B cell (primary cell): ENCODE measurements at regions of chr14 and their contacts with region 1.

Region 1: DNA sequence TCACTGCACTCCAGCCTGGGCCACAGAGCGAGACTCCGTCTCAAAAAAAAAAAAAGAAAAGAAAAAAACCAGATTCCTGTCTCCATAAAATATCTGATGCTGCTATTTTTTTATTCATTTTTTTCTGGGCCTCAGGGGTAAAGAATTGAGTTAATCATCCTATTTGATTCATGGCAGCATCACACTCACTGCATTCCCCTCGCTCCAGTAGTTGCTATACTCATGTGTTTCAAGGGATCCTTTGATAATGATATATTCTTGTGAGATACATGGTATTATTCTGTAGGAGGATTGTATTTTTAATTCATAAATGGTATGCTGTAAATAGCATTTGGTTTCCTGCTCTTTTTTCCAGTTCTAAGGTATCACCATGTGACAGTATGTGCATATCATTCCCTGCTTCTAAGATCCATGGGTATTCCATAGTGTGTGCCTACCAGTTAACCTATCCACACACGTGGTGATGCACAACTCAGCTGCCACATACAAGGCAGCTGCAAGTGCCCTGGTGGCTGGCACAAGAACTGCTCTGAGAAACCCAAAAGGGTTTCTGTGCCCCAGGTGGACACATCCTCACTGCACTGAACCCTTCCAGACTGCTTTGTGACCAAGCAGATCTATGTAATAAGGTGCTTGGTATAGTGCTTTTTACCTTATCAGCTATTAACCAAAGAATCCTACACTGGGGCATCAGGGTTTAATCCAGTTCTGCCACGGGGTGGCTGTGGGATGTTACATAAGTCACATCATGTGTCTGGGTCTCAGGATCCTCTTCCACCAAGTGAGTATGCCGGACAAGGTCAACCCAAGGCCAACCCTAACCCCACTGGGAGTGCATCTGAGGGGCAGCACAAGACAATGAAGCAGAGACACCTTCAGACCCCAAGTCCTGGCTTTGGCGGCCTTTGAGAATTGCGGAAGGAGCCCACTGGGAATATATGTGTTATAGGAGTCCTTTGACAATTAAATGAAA is 74.6 kb downstream of the ZFP36L1 start:
- DNase-seq: no peak
- ATAC-seq: peak; percentile 58
- H3K4me3 ChIP-seq: no peak overlapping the region
- H3K4me3 Mint-ChIP-seq: no peak overlapping the region
- H3K27ac ChIP-seq: no peak overlapping the region
- H3K27ac Mint-ChIP-seq: no peak overlapping the region
- H3K4me1 ChIP-seq: peaks cover 0 to 3% of the 10 kb centered on the region in 2 donors
- H3K4me1 Mint-ChIP-seq: peaks cover 16% of the 10 kb centered on the region
- H3K27me3 ChIP-seq: no peaks in the 10 kb centered on the region
- H3K27me3 Mint-ChIP-seq: no peaks in the 10 kb centered on the region
- CTCF ChIP-seq: peak; percentile 44

Region 2: GRCh38 chr14:68444449-68445168 is 273.7 kb before region 1 on chr14:
- CTCF ChIA-PET with region 1: no interaction called
- POLR2A ChIA-PET with region 1: interaction called, 10 read pairs
- intact Hi-C with region 1: no loop called
- DNase-seq: no peak
- ATAC-seq: no peak
- H3K4me3 ChIP-seq: no peak overlapping the region
- H3K4me3 Mint-ChIP-seq: no peak overlapping the region
- H3K27ac ChIP-seq: no peak overlapping the region
- H3K27ac Mint-ChIP-seq: no peak overlapping the region
- H3K4me1 ChIP-seq: peaks cover 3 to 5% of the 10 kb centered on the region in 2 donors
- H3K4me1 Mint-ChIP-seq: peaks cover 16% of the 10 kb centered on the region
- H3K27me3 ChIP-seq: no peaks in the 10 kb centered on the region
- H3K27me3 Mint-ChIP-seq: no peaks in the 10 kb centered on the region
- CTCF ChIP-seq: no peak

Region 3: GRCh38 chr14:68598621-68599447 is 119.5 kb before region 1 on chr14:
- CTCF ChIA-PET with region 1: no interaction called
- POLR2A ChIA-PET with region 1: no interaction called
- intact Hi-C with region 1: no loop called
- DNase-seq: no peak
- ATAC-seq: no peak
- H3K4me3 ChIP-seq: no peak overlapping the region
- H3K4me3 Mint-ChIP-seq: no peak overlapping the region
- H3K27ac ChIP-seq: no peak overlapping the region
- H3K27ac Mint-ChIP-seq: no peak overlapping the region
- H3K4me1 ChIP-seq: peaks cover 10 to 14% of the 10 kb centered on the region in 2 donors
- H3K4me1 Mint-ChIP-seq: peaks cover 15% of the 10 kb centered on the region
- H3K27me3 ChIP-seq: no peaks in the 10 kb centered on the region
- H3K27me3 Mint-ChIP-seq: no peaks in the 10 kb centered on the region
- CTCF ChIP-seq: no peak